Vagina (tissue), 2 donors: ENCODE measurements at regions of chr10 and their contacts with region 1.

Region 1: DNA sequence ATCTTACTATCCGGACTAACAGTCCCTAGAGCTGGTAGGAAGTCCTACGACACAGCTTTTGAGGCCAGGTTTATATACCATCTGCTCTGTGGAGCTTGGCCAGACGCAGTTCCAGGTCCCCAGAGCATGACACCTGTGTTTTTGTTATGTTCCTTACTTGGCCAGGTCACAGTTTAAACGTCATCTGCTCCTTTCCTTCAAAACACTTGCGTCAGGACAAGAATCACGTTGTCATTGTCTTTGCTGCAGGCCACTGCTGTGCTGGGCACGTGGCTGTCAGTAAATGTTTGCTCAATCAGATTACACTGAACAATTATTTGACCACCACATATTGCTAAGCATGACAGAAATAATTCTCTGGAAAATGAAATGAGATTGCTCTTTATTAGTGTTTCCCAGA is 23.9 kb downstream of the SLC18A2 start:
- DNase-seq: peak in 1 of 2 donors; percentile 49
- H3K4me3 ChIP-seq: no peak overlapping the region
- H3K27ac ChIP-seq: no peak overlapping the region
- H3K4me1 ChIP-seq: no peaks in the 10 kb centered on the region
- H3K27me3 ChIP-seq: no peaks in the 10 kb centered on the region
- CTCF ChIP-seq: no peak
- POLR2A ChIP-seq: no peak

Region 2: DNA sequence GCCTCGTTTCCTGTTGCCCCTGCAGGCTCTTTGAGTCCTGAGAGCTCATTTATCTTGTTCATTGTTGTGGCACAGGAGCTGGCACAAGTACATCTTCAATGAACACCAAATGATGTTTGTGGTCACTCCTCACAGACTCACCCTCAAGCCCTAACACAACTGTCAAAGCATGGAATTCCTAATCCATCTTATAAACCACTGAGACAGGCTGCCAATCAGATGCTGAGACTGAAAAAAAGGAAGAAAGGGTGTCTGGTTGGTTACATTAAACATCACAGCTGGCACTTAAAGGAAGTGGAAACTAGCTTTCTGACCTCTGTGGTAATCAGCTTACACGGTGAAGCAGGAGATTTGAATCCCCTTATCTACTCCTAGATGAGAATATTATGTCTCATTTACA is 948.2 kb before region 1 on chr10:
- intact Hi-C with region 1: loop called (anchors 5 kb)
- DNase-seq: no peak
- H3K4me3 ChIP-seq: no peak overlapping the region
- H3K27ac ChIP-seq: no peak overlapping the region
- H3K4me1 ChIP-seq: no peaks in the 10 kb centered on the region
- H3K27me3 ChIP-seq: no peaks in the 10 kb centered on the region
- CTCF ChIP-seq: no peak
- POLR2A ChIP-seq: no peak

Region 3: GRCh38 chr10:118827466-118828155 is 1562.8 kb after region 1 on chr10:
- intact Hi-C with region 1: no loop called
- DNase-seq: no peak
- H3K4me3 ChIP-seq: no peak overlapping the region
- H3K27ac ChIP-seq: no peak overlapping the region
- H3K4me1 ChIP-seq: peaks cover 11% of the 10 kb centered on the region
- H3K27me3 ChIP-seq: no peaks in the 10 kb centered on the region
- CTCF ChIP-seq: no peak
- POLR2A ChIP-seq: no peak